Activated CD4-positive, alpha-beta T cell treated with anti-CD3 and anti-CD28 coated beads, Interleukin-2, amount 10 ng/mL, durations not matched to agents 24 days and 14 days (primary cell): ENCODE measurements at regions of chr6 and their contacts with region 1.

Region 1: DNA sequence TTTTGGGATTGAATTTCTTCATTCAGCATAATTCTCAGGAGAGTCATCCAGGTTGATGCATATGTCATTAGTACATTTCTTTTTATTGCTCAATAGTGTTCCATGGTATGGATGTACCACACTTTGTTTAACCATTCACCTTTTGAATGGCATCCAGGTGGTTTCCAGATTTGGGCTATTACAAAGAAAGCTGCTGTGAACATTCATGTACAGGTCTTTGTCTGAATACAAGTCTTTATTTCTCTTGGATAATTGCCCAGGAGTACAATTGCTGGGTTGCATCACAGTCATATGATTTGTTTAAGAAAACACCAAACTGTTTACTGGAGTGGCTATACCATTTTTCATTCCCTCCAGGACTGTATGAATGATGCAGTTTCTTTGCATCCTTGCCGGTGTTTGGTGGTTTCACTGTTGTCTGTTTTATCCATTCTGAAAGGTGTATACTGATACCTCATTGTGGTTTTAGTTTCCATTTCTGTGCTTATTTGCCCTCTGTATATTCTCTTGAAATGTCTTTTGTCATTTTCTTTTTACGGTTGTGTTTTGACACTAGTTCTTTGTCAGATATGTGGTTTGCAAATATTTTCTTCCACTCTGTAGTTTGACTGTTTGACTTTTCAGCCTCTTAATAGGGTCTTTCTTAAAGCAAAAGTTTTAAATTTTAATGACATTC is 8.8 kb downstream of the CDKAL1 start:
- DNase-seq: peak; percentile 82
- H3K4me3 Mint-ChIP-seq: peak overlapping the region; percentile 38
- H3K27ac Mint-ChIP-seq: peak overlapping the region; percentile 88
- H3K4me1 Mint-ChIP-seq: peaks cover 43% of the 10 kb centered on the region
- H3K27me3 Mint-ChIP-seq: no peaks in the 10 kb centered on the region

Region 2: DNA sequence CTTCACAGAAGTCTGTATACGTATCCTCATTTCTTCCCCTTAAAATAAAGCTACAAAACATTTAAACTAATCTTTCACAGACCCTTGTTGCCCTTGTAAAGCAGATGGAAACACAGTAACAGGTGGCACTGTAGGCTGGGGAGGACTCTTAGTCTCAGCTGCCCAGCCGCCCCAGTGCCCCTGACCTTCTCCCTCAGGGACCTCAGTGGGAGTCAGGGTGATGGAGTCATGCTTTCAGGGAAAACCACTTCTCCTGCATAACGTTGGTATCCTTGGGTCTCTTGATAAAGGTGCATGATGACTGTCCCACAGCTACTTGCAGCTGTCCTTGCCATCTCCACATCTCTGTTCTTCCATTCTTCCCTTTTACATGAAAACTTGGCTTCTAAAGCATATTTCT is 189.8 kb after region 1 on chr6:
- intact Hi-C with region 1: no loop called
- DNase-seq: no peak
- H3K4me3 Mint-ChIP-seq: no peak overlapping the region
- H3K27ac Mint-ChIP-seq: no peak overlapping the region
- H3K4me1 Mint-ChIP-seq: no peaks in the 10 kb centered on the region
- H3K27me3 Mint-ChIP-seq: no peaks in the 10 kb centered on the region

Region 3: DNA sequence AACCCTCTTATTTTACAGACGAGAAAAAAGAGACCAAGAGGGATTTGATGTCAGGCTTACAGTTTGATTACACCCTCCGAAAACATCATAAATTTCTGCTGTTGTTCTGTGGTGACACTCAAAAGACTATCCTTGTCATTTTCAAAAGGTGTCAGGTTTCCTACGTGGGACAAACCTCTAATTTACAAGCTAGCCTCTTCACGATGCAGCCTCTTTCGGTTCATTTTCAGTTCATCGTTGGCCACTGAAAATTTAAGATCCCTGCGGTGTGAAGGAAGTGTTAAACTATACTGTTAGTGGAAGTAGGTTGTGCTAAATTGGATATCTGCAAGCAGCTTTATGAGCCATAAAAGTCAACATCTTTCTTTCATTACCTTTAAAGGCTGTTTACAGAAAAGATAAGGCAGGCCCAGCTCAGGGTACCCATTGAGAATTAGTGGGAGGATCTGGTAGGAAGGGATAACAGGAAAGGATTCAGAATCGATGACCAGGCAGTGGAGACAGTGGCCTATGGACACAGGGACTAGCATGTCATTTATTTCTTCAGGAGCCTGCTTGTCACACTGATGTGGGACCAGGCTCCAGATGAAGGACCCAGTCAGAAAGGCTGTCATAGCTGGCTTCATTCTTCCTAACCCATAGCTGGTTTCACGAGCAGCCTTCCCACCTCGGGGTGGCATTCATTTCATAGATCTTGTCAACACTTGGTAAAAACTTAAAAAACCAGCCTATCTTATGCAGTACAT is 721.4 kb after region 1 on chr6:
- intact Hi-C with region 1: loop called (anchors 1 kb)
- DNase-seq: no peak
- H3K4me3 Mint-ChIP-seq: no peak overlapping the region
- H3K27ac Mint-ChIP-seq: no peak overlapping the region
- H3K4me1 Mint-ChIP-seq: peaks cover 10% of the 10 kb centered on the region
- H3K27me3 Mint-ChIP-seq: no peaks in the 10 kb centered on the region